Activated CD4-positive, alpha-beta memory T cell treated with anti-CD3 and anti-CD28 coated beads for 36 hours (primary cell): ENCODE measurements at regions of chr16 and their contacts with region 1.

Region 1: DNA sequence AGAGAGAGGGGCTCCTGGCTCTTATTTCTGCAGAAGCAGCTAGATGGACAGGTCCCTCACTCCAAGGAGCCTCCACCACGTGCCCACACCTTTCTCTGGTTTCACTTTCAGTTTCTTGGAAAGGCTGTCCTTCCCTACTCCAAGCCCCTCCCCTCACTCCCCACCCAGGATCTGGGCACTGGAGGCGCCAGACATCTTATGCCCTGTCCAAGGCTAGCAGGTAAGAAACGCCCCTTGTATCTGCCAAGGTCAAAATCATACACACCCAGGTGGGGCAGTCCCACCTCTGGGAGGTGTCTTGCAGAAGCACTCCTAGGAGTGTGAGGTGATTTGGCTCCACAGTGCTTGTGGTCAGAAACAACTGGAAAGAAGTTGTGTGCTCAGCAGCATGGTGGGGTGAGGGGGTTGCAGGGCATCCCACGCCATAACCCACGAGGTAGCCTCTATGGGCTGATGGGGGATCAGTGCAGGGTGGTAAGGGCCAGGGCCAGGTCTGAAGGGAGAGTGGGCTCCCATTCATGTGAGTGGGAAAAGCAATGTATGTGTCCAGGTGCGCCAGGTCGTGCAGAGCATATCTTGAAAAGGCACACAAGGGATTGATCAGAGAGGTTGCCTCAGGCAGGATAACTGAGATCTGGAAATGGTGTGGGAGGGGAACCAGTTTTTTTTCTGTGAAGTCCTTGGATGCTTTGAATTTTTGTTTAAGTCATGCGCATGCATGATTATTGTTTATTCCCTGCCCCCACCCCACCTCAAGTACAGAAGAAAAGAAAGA is 31.8 kb upstream of the PRM1 start:
- DNase-seq: peak; percentile 42
- H3K4me3 Mint-ChIP-seq: no peak overlapping the region
- H3K27ac Mint-ChIP-seq: no peak overlapping the region
- H3K4me1 Mint-ChIP-seq: peaks cover 45% of the 10 kb centered on the region
- H3K27me3 Mint-ChIP-seq: no peaks in the 10 kb centered on the region

Region 2: GRCh38 chr16:11263737-11264136 is 49.2 kb before region 1 on chr16:
- CTCF ChIA-PET with region 1: interaction called, 3 read pairs
- POLR2A ChIA-PET with region 1: interaction called, 3 read pairs
- intact Hi-C with region 1: loop called (anchors 1 kb)
- DNase-seq: peak; percentile 83
- H3K4me3 Mint-ChIP-seq: peak overlapping the region; percentile 24
- H3K27ac Mint-ChIP-seq: peak overlapping the region; percentile 86
- H3K4me1 Mint-ChIP-seq: peaks cover 32% of the 10 kb centered on the region
- H3K27me3 Mint-ChIP-seq: no peaks in the 10 kb centered on the region

Region 3: DNA sequence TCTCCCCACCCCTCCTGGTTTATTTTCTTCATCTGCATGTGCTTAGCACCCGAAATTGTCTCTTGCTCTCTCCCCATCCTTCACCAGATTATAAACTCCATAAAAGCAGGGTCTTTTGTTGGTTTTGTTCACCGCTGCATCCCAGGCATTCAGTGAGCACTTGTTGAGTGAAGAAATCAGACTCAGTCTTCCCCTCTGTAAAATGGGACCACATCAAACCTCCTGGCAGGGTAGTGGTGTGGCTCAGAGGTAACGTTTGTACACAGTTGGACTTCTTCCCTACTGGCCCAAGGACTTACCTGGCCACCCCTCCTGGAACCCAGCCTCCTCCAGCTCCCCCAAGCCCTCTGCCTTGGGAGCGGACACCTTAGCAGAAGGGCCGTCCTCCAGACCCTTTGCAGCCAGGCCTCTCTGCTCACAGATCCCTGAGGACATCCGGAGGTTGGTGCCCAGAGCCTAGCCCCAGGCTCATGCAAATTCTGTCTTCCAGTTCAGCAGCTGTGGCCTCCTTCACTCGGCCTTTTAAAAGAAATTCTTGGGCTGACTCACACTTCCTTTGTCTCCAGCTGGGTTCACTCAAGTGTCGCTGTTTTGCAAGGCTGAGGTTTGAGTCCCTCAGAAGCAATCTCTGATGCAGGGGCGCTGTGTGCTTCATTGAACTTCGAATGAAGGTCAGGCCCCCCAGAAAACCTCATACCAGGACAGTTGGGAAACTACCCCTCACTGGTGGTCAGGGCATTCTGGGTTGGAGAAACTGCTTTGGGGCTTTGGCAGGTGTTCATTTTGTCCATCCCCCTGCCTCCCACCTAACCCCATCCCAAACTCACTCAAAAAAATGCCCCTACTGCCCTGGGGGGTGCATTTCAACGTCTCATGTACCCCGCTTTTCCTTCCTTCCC is 15.5 kb after region 1 on chr16:
- CTCF ChIA-PET with region 1: no interaction called
- POLR2A ChIA-PET with region 1: interaction called, 7 read pairs
- intact Hi-C with region 1: loop called (anchors 1 kb)
- DNase-seq: peak; percentile 74
- H3K4me3 Mint-ChIP-seq: peak overlapping the region; percentile 36
- H3K27ac Mint-ChIP-seq: peak overlapping the region; percentile 53
- H3K4me1 Mint-ChIP-seq: peaks cover 52% of the 10 kb centered on the region
- H3K27me3 Mint-ChIP-seq: no peaks in the 10 kb centered on the region